Stomach (tissue), 19 donors: ENCODE measurements at regions of chr18 and their contacts with region 1.

Region 1: GRCh38 chr18:5879479-5879882 is 15.8 kb downstream of the TMEM200C start:
- DNase-seq: peak in 1 of 2 donors; percentile 42
- H3K4me3 ChIP-seq: no peak overlapping the region
- H3K27ac ChIP-seq: no peak overlapping the region
- H3K4me1 ChIP-seq: no peaks in the 10 kb centered on the region
- H3K27me3 ChIP-seq: peaks cover 0 to 21% (median 0%) of the 10 kb centered on the region in 3 donors
- CTCF ChIP-seq: peak in 5 of 7 experiments; percentile 52 to 74 (median 65)
- EP300 ChIP-seq: no peak
- POLR2A ChIP-seq: no peak

Region 2: GRCh38 chr18:5574843-5575242 is 304.6 kb before region 1 on chr18:
- intact Hi-C with region 1: no loop called
- DNase-seq: no peak
- H3K4me3 ChIP-seq: no peak overlapping the region
- H3K27ac ChIP-seq: no peak overlapping the region
- H3K4me1 ChIP-seq: no peaks in the 10 kb centered on the region
- H3K27me3 ChIP-seq: no peaks in the 10 kb centered on the region
- CTCF ChIP-seq: no peak
- EP300 ChIP-seq: no peak
- POLR2A ChIP-seq: no peak

Region 3: GRCh38 chr18:6044773-6045172 is 165.3 kb after region 1 on chr18:
- intact Hi-C with region 1: no loop called
- DNase-seq: no peak
- H3K4me3 ChIP-seq: no peak overlapping the region
- H3K27ac ChIP-seq: no peak overlapping the region
- H3K4me1 ChIP-seq: no peaks in the 10 kb centered on the region
- H3K27me3 ChIP-seq: no peaks in the 10 kb centered on the region
- CTCF ChIP-seq: no peak
- EP300 ChIP-seq: no peak
- POLR2A ChIP-seq: no peak

Region 4: DNA sequence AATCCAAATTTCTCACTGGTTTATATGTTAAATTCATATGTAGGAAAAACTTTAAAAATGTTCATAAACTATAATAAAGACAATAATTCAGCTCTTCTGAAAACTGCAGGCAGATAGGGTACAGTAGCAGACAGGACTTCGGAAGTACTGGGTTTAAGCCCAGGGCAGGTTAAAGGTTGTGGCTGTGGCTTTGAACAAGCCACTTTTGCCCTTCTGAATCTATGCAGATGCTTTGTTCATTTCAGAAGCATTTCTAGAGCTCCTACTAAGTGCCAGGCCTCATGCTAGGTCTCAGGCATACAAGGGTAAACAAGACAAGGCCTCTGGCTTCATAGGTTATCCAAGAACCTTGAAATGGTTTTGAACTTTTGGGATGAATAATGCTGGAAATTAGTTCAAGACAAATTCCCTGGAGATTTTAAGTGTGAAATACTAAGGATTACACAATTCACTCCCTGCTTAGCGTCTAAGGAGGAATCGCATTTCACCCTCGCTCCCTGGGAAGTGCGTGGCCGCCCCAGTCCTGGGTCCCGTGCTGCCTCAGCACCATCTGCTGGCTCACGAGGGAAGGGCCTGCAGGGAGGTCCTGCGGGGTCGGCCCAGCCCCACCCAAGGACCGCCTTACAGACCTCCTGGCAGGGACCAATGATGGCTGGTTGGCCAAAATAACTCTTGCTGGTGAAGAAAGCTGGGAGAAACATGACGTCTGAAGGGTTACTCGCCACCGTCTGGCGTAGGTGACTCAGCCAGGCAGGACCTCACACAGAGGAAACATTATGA is 602.9 kb after region 1 on chr18:
- intact Hi-C with region 1: loop called (anchors 10 kb)
- DNase-seq: peak; percentile 60 to 78
- H3K4me3 ChIP-seq: no peak overlapping the region
- H3K27ac ChIP-seq: no peak overlapping the region
- H3K4me1 ChIP-seq: peaks cover 0 to 9% (median 2%) of the 10 kb centered on the region in 4 donors
- H3K27me3 ChIP-seq: no peaks in the 10 kb centered on the region
- CTCF ChIP-seq: peak in 5 of 7 experiments; percentile 65 to 77 (median 69)
- EP300 ChIP-seq: no peak
- POLR2A ChIP-seq: no peak

Region 5: DNA sequence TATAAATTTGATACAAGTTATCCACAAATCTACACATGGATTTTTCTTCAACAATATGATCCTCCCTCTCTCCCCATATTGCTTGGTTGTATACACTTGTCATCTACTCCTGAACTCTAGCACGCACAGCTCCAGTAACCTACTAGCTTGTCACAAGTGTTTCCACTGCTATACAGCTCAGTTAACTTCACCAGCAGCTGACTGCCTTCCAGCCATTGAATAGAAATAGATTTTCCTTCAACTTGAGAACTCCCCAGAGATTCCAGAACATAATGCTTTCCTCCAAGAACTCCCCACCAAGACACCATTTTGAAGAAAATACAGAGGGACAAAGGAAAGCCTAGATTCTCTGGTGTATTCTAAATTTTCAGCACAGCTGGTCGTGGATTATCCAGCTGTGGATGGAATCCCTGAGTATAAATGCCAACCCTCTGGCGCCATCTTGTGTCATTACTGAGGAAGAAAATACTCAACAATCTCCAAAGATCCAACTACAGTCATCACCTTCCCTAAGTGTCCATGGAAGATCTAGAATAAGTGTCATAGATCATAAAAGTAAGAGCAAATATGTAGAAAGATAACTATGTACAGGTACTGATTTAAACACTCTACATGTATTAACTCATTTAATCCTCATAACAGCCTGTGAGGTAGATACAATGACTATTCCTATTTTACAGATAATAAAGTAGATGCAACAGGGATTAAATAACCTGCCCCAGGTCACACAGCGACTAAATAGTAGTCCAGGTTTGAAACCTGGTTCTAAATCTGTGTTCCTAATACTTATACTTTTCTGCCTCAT is 1006.7 kb after region 1 on chr18:
- intact Hi-C with region 1: loop called (anchors 10 kb)
- DNase-seq: peak; percentile 40 to 87
- H3K4me3 ChIP-seq: no peak overlapping the region
- H3K27ac ChIP-seq: no peak overlapping the region
- H3K4me1 ChIP-seq: peaks cover 0 to 9% (median 3%) of the 10 kb centered on the region in 4 donors
- H3K27me3 ChIP-seq: no peaks in the 10 kb centered on the region
- CTCF ChIP-seq: peak in 4 of 7 experiments; percentile 18 to 76 (median 55)
- EP300 ChIP-seq: no peak
- POLR2A ChIP-seq: no peak